ENCODE measurements at regions of chr12 and their contacts with region 1.

Region 1: GRCh38 chr12:99505805-99506204 is 141.7 kb upstream of the GARIN6 start:
- DNase-seq: no peak
- H3K4me3 ChIP-seq: no peak overlapping the region
- H3K27ac ChIP-seq: no peak overlapping the region
- H3K4me1 ChIP-seq: no peaks in the 10 kb centered on the region
- H3K27me3 ChIP-seq: no peaks in the 10 kb centered on the region
- CTCF ChIP-seq: no peak
- POLR2A ChIP-seq: no peak

Region 2: DNA sequence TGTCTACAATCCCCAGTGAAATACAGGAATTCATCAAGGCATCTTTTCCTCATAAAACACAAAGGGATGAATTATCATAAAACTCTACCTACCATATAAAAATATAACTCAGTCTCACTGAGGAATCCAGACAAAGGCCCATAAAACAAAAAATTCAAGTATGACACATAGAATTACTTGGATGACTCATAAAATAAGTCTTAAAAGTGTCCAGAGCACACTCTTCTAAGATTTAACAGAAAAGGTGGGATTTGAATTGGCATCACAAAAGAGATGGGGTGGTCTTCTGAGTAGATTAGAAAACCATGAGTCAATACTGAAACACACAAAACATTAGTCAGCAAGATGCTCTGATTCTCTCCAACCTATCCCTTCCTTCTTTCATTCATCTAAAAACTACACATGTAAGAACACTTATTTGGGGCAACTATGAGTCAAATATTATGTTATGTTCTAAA is 60.9 kb before region 1 on chr12:
- intact Hi-C with region 1: loop called in 1 of 2 experiments (anchors 5 kb)
- DNase-seq: no peak
- H3K4me3 ChIP-seq: no peak overlapping the region
- H3K27ac ChIP-seq: no peak overlapping the region
- H3K4me1 ChIP-seq: no peaks in the 10 kb centered on the region
- H3K27me3 ChIP-seq: no peaks in the 10 kb centered on the region
- CTCF ChIP-seq: no peak
- POLR2A ChIP-seq: no peak

Region 3: DNA sequence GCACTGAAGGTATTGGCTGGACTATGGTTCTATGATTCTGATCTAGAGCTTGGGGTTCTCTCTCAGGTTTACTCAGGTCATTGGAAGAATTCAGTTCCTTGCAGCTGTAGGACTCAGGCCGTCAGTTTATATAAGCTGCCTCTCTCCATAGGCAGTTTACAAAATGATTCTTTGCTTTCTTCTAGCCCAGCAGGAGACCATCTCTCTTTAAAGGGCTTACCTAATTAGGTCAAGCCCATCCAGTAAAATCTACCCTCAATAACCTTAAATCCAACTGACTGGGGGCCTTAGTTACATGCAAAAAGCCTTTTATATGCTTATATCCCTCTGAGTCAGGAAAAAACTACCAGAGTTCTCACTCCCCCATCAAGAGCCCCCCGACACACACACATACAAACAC is 61.3 kb after region 1 on chr12:
- intact Hi-C with region 1: no loop called
- DNase-seq: no peak
- H3K4me3 ChIP-seq: no peak overlapping the region
- H3K27ac ChIP-seq: no peak overlapping the region
- H3K4me1 ChIP-seq: no peaks in the 10 kb centered on the region
- H3K27me3 ChIP-seq: no peaks in the 10 kb centered on the region
- CTCF ChIP-seq: no peak
- POLR2A ChIP-seq: no peak

Region 4: DNA sequence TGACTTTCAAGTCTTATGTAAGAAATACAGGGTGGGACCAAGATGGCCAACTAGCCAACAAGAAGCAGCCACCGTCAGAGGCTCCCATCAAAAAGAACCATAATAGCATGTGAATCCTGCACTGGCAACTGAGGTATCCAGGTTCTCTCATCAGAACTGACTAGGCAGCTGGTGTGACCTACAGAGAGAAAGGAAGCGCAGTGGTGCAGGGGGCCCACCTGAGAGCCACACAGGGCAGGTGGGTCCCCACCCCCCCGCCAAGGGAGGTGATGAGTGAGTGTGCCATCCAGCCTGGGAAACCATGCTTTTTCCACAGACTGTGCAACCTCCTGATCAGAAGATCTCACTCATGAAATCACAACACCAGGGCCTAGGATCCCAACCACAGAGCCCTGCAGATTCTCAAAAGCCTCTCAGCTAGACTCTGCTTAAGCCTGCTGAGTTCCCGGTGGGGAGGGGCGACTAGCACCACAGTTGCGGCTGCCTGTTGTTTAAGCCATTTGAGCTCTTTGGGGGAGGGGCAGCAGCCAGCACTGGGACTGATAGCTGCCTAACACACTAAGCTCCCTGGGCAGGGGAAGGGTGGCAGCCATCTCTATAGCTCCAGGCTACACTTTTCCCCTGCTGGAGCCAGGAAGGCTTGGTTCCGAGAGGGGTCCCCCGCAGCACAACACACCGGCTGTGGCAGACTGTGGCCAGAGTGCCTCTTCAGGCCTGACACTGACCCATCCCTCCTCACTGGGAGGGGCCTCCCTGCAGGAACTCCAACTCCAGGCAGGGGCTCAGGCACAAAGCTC is 217.1 kb after region 1 on chr12:
- intact Hi-C with region 1: no loop called
- DNase-seq: no peak
- H3K4me3 ChIP-seq: no peak overlapping the region
- H3K27ac ChIP-seq: no peak overlapping the region
- H3K4me1 ChIP-seq: no peaks in the 10 kb centered on the region
- H3K27me3 ChIP-seq: no peaks in the 10 kb centered on the region
- CTCF ChIP-seq: no peak
- POLR2A ChIP-seq: no peak

Measured in adrenal gland (tissue), 19 donors.